ENCODE measurements at regions of chr10 and their contacts with region 1.

Region 1: DNA sequence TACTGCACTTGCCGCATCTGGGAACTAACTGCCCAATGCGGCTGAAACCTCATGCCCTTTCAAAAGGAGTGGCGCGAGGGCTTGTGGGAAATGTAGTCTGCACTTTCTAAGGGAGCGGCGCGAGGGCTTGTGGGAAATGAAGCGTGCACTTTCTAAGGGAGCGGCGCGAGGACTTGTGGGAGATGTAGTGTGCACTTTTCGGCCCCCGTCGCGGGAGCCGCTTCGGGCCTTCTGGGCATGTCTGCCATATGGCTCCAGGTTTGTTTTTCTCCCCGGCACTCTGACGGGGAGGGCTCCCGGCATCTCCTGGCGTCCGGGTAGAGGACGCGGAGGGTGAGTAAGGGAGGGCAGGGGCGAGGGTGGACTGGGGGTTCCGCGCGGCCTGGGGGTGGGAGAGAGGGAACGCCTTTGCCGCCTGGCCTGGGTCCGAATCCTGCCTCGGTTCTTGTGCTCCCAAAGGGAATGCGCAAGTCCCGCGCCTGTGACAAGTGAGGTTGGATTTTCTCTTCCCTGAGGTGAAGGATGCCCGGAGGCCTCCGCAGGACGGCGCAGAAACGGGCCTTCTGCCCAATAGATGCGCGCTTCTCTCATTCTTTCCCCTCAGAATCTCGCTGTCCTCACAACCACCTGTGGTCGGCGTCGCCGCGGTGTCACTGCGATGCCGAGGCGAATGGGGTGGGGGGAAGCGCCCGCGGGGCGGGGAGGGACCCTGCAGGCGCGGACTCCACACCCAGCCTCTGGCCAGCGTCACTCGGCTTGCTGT is at the start of gene ZNF37A:
- DNase-seq: peak; percentile 93 to 95
- ATAC-seq: peak; percentile 99
- H3K4me3 ChIP-seq: peak within 1 kb of the TSS; percentile 72 to 92 (median 89)
- H3K27ac ChIP-seq: peak within 1 kb of the TSS; percentile 83 to 87 (median 86)
- H3K4me1 ChIP-seq: peaks cover 8 to 12% of the 10 kb centered on the region in 2 donors
- H3K27me3 ChIP-seq: no peaks in the 10 kb centered on the region
- CTCF ChIP-seq: no peak
- POLR2A ChIP-seq: peak; percentile 56 to 83
- total RNA-seq, gene ZNF37A: 4.3 to 13.4 (median 8.7) TPM

Region 2: DNA sequence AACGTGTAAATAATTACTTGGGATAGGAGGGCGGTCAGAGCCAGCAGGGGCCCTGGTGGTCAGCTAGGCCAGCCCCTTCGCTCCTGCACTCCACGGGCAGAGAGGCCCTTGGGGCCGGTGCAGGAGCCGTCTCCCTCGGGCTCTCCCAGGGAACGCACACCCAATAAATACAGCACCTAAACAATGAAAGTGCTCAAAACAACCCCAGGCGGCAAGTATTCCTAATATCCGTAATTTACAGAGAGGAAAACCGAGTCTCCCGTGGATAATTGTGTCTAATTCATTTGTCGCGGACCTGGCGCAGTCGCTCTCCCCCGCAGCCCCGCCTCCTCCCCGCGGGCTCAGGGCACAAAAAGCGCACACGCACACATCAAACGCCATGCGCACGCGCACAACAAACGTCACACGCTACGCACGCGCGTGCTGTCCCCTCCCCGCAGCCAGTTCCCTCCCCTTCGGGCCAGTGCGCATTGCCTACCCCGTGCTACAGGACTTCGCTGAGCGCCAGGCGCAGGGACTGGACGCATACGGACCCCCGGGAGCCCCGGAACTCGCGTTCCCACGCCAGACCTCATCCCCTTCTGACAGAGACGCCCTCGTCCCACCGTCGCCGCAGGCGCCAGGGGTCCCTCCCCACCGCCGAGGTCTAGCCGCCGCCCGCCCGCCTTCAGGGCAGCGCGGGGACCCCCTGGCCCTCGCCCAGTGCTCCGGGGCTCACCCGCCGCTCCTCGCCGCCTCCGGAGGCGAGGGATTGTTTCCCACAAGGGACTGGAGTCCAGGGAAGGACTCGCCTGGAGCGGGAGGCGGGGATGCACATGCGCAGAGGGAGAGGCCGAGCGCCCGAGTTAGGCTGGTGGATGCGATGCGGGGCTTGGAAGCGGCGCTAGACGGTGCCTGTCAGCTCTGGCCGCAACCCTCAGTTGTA is 236.8 kb before region 1 on chr10 and contains the start of gene ZNF248:
- in situ Hi-C with region 1: loop called in 3 of 4 experiments (anchors 10 to 25 kb)
- intact Hi-C with region 1: loop called (anchors 1 kb)
- DNase-seq: peak; percentile 94 to 96
- ATAC-seq: peak; percentile 97 to 99
- H3K4me3 ChIP-seq: peak within 1 kb of the TSS; percentile 85 to 95 (median 89)
- H3K27ac ChIP-seq: peak within 1 kb of the TSS; percentile 99 to 100 (median 100)
- H3K4me1 ChIP-seq: peaks cover 32 to 34% of the 10 kb centered on the region in 2 donors
- H3K27me3 ChIP-seq: no peaks in the 10 kb centered on the region
- CTCF ChIP-seq: peak in 1 of 5 experiments; percentile 20
- POLR2A ChIP-seq: peak; percentile 94 to 95
- total RNA-seq, gene ZNF248: 2.1 to 17.3 (median 7.8) TPM

Region 3: DNA sequence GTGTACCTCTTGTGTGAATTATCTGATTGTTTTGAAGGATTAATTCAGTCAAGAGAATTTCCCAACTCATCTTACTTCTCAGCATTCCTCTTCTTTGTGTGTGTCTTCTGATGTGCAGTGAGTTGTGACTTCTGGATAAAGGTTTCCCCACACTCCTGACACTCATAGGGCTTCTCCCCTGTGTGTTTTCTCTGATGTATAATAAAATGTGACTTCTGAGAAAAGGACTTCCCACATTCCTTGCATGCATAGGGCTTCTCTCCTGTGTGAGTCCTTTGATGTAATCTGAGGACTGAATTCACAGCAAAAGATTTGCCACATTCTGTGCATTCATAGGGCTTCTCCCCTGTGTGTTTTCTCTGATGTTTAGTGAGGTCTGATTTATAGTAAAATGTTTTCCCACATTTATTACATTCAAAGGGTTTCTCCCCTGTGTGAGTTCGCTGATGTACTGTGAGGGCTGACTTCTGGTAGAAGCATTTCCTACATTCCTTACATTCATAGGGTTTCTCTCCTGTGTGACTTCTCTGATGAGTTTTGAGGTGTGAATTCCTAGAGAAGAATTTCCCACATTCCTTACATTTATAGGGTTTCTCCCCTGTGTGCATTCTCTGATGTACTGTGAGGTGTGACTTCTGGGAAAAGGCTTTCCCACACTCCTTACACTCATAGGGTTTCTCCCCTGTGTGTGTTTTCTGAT is 142.1 kb before region 1 on chr10:
- in situ Hi-C with region 1: loop called in 1 of 4 experiments (anchors 25 kb)
- intact Hi-C with region 1: no loop called
- DNase-seq: no peak
- ATAC-seq: no peak
- H3K4me3 ChIP-seq: no peak overlapping the region
- H3K27ac ChIP-seq: no peak overlapping the region
- H3K4me1 ChIP-seq: no peaks in the 10 kb centered on the region
- H3K27me3 ChIP-seq: no peaks in the 10 kb centered on the region
- CTCF ChIP-seq: no peak
- POLR2A ChIP-seq: no peak

Region 4: DNA sequence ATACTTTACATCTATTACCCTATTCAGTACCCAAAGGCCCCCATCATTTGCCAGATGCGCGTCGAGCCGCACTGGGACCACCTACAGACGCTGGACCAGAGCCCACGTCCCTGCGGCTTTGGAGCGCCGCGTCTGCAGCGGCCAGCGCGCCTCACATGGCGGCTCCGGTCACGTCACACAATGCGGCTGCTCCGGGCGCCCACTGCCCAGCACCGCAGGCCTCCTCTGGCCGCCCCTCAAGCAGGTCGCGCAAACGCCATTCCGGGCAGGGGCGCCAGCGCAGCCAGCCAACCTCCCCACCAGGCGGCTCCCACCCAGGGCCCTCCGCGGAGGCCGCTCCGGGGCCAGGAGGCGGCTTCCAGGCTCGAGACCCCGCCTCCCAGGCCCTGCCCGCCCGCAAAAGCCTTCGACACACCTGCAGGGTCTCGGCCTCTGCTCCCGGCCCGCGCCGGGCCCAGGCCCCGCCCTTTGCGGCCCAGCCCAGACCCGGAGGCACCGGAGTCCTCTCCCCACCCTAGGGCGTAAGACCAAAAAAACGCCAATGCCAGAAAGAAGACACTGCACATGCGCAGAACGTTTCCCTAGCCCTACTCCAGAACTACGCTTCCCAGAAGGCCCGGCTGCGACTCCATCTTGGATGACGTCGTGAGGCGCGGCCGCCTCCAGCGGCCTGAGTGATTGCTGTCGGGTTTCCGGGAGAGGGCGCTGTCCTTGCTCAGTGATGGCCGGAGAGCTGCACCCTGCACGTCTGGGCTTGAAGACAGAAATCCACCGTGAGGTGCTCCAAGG is 118.1 kb before region 1 on chr10 and contains the start of gene ZNF25:
- in situ Hi-C with region 1: loop called in 3 of 4 experiments (anchors 10 to 25 kb)
- intact Hi-C with region 1: loop called (anchors 1 kb)
- DNase-seq: peak; percentile 98
- ATAC-seq: peak; percentile 99
- H3K4me3 ChIP-seq: peak within 1 kb of the TSS; percentile 71 to 95 (median 84)
- H3K27ac ChIP-seq: peak within 1 kb of the TSS; percentile 94 to 98 (median 96)
- H3K4me1 ChIP-seq: peaks cover 4 to 13% of the 10 kb centered on the region in 2 donors
- H3K27me3 ChIP-seq: no peaks in the 10 kb centered on the region
- CTCF ChIP-seq: peak; percentile 79 to 95 (median 89)
- POLR2A ChIP-seq: peak; percentile 81 to 84
- total RNA-seq, gene ZNF25: 18.8 to 35.0 (median 23.4) TPM

Region 5: GRCh38 chr10:38010119-38010903 is 84.0 kb before region 1 on chr10 and contains the start of gene ZNF33A:
- in situ Hi-C with region 1: no loop called
- intact Hi-C with region 1: loop called (anchors 1 kb)
- DNase-seq: peak; percentile 90 to 94
- ATAC-seq: peak; percentile 96 to 98
- H3K4me3 ChIP-seq: peak within 1 kb of the TSS; percentile 82 to 95 (median 87)
- H3K27ac ChIP-seq: peak within 1 kb of the TSS; percentile 96 to 99 (median 98)
- H3K4me1 ChIP-seq: peaks cover 9 to 10% of the 10 kb centered on the region in 2 donors
- H3K27me3 ChIP-seq: no peaks in the 10 kb centered on the region
- CTCF ChIP-seq: peak in 1 of 5 experiments; percentile 27
- POLR2A ChIP-seq: peak; percentile 39 to 67
- total RNA-seq, gene ZNF33A: 14.3 to 31.1 (median 16.8) TPM

Region 6: GRCh38 chr10:38054361-38054797 is 40.0 kb before region 1 on chr10:
- in situ Hi-C with region 1: no loop called
- intact Hi-C with region 1: no loop called
- DNase-seq: no peak
- ATAC-seq: no peak
- H3K4me3 ChIP-seq: peak overlapping the region in 1 of 4 donors; percentile 14
- H3K27ac ChIP-seq: no peak overlapping the region
- H3K4me1 ChIP-seq: no peaks in the 10 kb centered on the region
- H3K27me3 ChIP-seq: no peaks in the 10 kb centered on the region
- CTCF ChIP-seq: no peak
- POLR2A ChIP-seq: no peak

Region 7: DNA sequence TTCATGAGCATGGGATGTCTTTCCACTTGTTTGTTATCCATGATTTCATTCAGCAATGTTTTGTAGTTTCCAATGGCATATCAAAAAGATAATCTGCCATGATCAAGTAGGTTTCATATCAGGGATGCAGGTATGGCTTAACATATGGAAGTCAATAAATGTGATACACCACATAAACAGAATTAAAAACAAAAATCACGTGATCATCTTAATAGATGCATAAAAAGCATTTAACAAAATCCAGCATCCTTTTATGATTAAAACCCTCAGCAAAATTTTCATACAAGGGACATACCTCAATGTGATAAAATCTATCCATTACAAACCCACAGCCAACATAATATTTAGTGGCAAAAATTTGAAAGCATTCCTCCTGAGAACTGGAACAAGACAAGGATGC is 90.1 kb after region 1 on chr10:
- in situ Hi-C with region 1: no loop called
- intact Hi-C with region 1: no loop called
- DNase-seq: no peak
- ATAC-seq: no peak
- H3K4me3 ChIP-seq: no peak overlapping the region
- H3K27ac ChIP-seq: no peak overlapping the region
- H3K4me1 ChIP-seq: no peaks in the 10 kb centered on the region
- H3K27me3 ChIP-seq: no peaks in the 10 kb centered on the region
- CTCF ChIP-seq: no peak
- POLR2A ChIP-seq: no peak

Measured in gastrocnemius medialis (tissue), 4 donors.